ENCODE measurements at regions of chr9 and their contacts with region 1.

Region 1: GRCh38 chr9:135961277-135961705 is at the start of gene UBAC1:
- DNase-seq: peak; percentile 88 to 98 (median 95)
- ATAC-seq: peak; percentile 88
- H3K4me3 ChIP-seq: peak within 1 kb of the TSS; percentile 73 to 76
- H3K4me3 Mint-ChIP-seq: peak within 1 kb of the TSS; percentile 88
- H3K27ac ChIP-seq: peak within 1 kb of the TSS; percentile 39 to 45
- H3K27ac Mint-ChIP-seq: peak within 1 kb of the TSS; percentile 82
- H3K4me1 ChIP-seq: peaks cover 15% of the 10 kb centered on the region
- H3K4me1 Mint-ChIP-seq: peaks cover 31% of the 10 kb centered on the region
- H3K27me3 ChIP-seq: no peaks in the 10 kb centered on the region
- H3K27me3 Mint-ChIP-seq: no peaks in the 10 kb centered on the region
- CTCF ChIP-seq: peak; percentile 26
- total RNA-seq, gene UBAC1: 18.5 to 22.0 TPM

Region 2: DNA sequence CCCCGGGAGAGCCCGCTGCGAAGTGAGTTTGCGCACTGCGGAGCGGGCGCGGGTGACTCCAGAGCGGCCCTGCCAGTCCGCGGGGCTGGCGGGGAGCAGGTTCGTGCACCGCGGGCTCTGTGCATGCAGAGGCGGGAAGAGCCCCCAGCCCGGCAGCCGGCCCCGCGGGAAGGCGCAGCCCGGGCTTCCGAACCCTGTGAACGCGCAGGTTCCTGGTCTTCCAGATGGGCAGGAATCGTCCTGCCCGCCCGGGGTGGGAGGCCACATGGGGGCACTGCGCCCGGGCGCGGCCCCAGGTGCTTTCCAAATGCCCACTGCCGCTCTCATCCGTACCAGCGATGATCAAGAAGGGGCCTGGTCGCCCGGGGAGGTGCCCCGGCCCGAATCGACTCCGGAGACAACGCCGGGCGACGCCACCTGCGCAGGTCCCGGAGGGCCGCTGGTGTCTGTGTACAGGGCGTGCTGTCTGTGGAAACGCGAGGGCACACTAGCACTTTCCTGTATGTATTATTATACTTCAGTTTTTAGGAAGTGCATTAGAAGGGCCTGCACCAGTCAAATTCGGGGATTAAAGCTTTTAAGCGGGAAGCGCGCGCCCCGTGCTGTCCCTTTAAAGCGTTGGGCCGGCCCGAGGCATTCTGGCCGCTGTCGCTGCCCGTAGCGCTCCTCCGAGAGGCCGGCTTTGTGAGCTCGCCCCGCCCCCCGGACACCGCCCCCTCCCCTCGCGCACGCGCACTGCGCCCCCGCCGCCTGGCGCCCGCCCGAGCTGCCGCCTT is 1825.8 kb before region 1 on chr9 and contains the start of gene WDR5:
- CTCF ChIA-PET with region 1: no interaction called
- POLR2A ChIA-PET with region 1: no interaction called
- intact Hi-C with region 1: loop called in 1 of 2 experiments (anchors 5 kb)
- DNase-seq: peak; percentile 81 to 95 (median 90)
- ATAC-seq: peak; percentile 86
- H3K4me3 ChIP-seq: peak within 1 kb of the TSS; percentile 92 to 98
- H3K4me3 Mint-ChIP-seq: peak within 1 kb of the TSS; percentile 89
- H3K27ac ChIP-seq: peak within 1 kb of the TSS; percentile 77 to 90
- H3K27ac Mint-ChIP-seq: peak within 1 kb of the TSS; percentile 95
- H3K4me1 ChIP-seq: peaks cover 38% of the 10 kb centered on the region
- H3K4me1 Mint-ChIP-seq: peaks cover 43% of the 10 kb centered on the region
- H3K27me3 ChIP-seq: no peaks in the 10 kb centered on the region
- H3K27me3 Mint-ChIP-seq: no peaks in the 10 kb centered on the region
- CTCF ChIP-seq: no peak
- total RNA-seq, gene WDR5: 15.5 to 16.6 TPM

Region 3: DNA sequence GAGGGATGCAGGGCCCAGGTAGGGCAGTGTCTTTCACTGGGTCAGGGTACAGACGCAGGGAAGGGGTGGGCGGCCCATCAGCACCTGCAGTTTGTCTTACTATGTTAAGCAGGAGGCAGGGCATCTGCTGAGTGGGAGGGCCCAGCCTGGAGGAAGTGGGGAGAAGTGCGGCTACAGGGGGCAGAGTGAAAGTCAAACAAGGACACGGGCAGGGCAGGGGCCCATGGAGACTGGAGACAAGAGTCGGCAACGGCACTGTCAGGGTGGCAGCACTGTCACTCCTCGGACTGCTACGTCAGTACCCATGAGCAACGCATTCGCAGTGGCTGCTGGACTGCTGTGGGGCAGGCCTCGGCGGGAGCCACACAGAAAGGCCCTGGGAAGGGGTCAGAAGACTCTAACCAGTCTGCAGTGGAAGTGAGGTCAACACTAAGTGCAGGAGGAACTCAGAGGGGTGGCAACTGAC is 73.7 kb before region 1 on chr9:
- CTCF ChIA-PET with region 1: no interaction called
- POLR2A ChIA-PET with region 1: no interaction called
- intact Hi-C with region 1: loop called in 1 of 2 experiments (anchors 5 kb)
- DNase-seq: peak; percentile 14 to 86 (median 65)
- ATAC-seq: peak; percentile 98
- H3K4me3 ChIP-seq: peak overlapping the region; percentile 25 to 50
- H3K4me3 Mint-ChIP-seq: peak overlapping the region; percentile 77
- H3K27ac ChIP-seq: peak overlapping the region; percentile 73 to 75
- H3K27ac Mint-ChIP-seq: peak overlapping the region; percentile 96
- H3K4me1 ChIP-seq: peaks cover 39% of the 10 kb centered on the region
- H3K4me1 Mint-ChIP-seq: peaks cover 80% of the 10 kb centered on the region
- H3K27me3 ChIP-seq: no peaks in the 10 kb centered on the region
- H3K27me3 Mint-ChIP-seq: no peaks in the 10 kb centered on the region
- CTCF ChIP-seq: no peak

Region 4: DNA sequence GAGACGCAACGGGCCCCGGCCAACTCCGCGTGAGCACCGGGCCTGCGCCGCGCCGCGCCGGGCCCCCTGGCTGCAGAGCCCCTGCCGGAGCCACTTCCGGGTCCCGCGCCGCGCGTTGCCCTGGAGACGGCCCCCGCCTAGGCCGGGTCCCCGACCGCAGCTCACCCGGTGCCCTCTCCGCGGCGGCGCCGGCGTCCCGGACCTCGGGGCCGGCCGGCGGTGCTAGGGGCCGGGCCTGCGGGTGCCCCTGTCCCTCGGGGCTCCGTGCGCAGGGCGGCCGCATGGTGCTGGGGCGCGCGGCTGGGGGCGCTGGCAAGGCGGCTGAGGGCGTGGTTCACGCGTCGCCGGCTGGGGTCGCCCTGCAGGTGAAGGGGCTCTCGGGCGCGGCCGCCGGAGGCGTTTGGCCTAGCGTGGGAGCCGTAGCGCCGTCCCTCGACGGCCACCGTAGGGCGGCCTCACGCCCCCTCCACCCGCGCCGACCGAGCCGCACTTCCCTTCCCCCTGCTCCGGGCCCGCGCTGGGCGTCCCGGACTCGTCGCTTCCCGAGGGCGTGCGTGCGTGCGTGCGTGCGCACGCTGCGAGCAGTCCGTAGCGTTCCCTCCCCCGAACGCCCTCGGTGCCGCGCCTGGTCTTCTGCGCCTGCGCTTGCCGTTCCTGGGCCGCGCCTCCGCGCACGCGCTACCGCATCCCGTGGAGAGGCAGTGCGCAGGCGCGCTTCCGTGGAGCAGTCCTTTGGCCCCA is 157.2 kb after region 1 on chr9 and contains the start of gene TMEM250:
- CTCF ChIA-PET with region 1: interaction called, 84 read pairs
- POLR2A ChIA-PET with region 1: interaction called, 3 read pairs
- intact Hi-C with region 1: loop called (anchors 1 kb)
- DNase-seq: peak; percentile 90 to 98 (median 95)
- ATAC-seq: peak; percentile 92
- H3K4me3 ChIP-seq: peak within 1 kb of the TSS; percentile 50 to 90
- H3K4me3 Mint-ChIP-seq: peak within 1 kb of the TSS; percentile 82
- H3K27ac ChIP-seq: peak within 1 kb of the TSS; percentile 66 to 79
- H3K27ac Mint-ChIP-seq: peak within 1 kb of the TSS; percentile 80
- H3K4me1 ChIP-seq: peaks cover 38% of the 10 kb centered on the region
- H3K4me1 Mint-ChIP-seq: peaks cover 21% of the 10 kb centered on the region
- H3K27me3 ChIP-seq: no peaks in the 10 kb centered on the region
- H3K27me3 Mint-ChIP-seq: no peaks in the 10 kb centered on the region
- CTCF ChIP-seq: no peak
- total RNA-seq, gene TMEM250: 7.6 to 7.7 TPM

Region 5: GRCh38 chr9:136363606-136364370 is 402.5 kb after region 1 on chr9 and contains the start of gene DNLZ:
- CTCF ChIA-PET with region 1: no interaction called
- POLR2A ChIA-PET with region 1: no interaction called
- intact Hi-C with region 1: loop called in 1 of 2 experiments (anchors 1 kb)
- DNase-seq: peak; percentile 67 to 94 (median 86)
- ATAC-seq: peak; percentile 77
- H3K4me3 ChIP-seq: peak within 1 kb of the TSS; percentile 51 to 72
- H3K4me3 Mint-ChIP-seq: peak within 1 kb of the TSS; percentile 83
- H3K27ac ChIP-seq: peak within 1 kb of the TSS; percentile 53 to 70
- H3K27ac Mint-ChIP-seq: peak within 1 kb of the TSS; percentile 73
- H3K4me1 ChIP-seq: peaks cover 6% of the 10 kb centered on the region
- H3K4me1 Mint-ChIP-seq: peaks cover 9% of the 10 kb centered on the region
- H3K27me3 ChIP-seq: no peaks in the 10 kb centered on the region
- H3K27me3 Mint-ChIP-seq: no peaks in the 10 kb centered on the region
- CTCF ChIP-seq: peak; percentile 97
- total RNA-seq, gene DNLZ: 21.0 to 22.1 TPM

Region 6: GRCh38 chr9:137618105-137619067 is 1657.1 kb after region 1 on chr9 and contains the start of gene EHMT1:
- CTCF ChIA-PET with region 1: no interaction called
- POLR2A ChIA-PET with region 1: no interaction called
- intact Hi-C with region 1: loop called in 1 of 2 experiments (anchors 2 kb)
- DNase-seq: peak; percentile 82 to 97 (median 89)
- ATAC-seq: peak; percentile 85
- H3K4me3 ChIP-seq: peak within 1 kb of the TSS; percentile 94 to 97
- H3K4me3 Mint-ChIP-seq: peak within 1 kb of the TSS; percentile 92
- H3K27ac ChIP-seq: peak within 1 kb of the TSS; percentile 82 to 97
- H3K27ac Mint-ChIP-seq: peak within 1 kb of the TSS; percentile 94
- H3K4me1 ChIP-seq: peaks cover 30% of the 10 kb centered on the region
- H3K4me1 Mint-ChIP-seq: peaks cover 42% of the 10 kb centered on the region
- H3K27me3 ChIP-seq: no peaks in the 10 kb centered on the region
- H3K27me3 Mint-ChIP-seq: no peaks in the 10 kb centered on the region
- CTCF ChIP-seq: no peak
- total RNA-seq, gene EHMT1: 83.1 to 86.2 TPM

Measured in CD8-positive, alpha-beta T cell (primary cell).